ENCODE measurements at regions of chr15 and their contacts with region 1.

Region 1: DNA sequence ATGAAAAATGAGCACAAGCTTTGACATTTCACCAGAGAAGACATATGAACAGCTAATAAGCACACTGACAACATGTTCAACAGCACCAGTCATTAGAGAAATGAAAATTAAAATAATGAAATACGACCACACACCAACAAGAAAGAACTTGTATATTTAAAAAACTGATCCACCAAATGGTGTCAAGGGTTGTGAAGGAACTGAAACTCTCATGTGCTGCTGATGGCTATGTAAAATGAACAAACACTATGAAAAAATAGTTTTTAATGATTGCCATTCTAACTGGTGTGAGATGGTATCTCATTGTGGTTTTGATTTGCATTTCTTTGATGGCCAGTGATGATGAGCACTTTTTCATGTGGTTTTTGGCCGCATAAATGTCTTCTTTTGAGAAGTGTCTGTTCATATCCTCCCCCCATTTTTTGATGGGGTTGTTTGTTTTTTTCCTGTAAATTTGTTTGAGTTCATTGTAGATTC is 193.8 kb downstream of the SCAPER start:
- DNase-seq: no peak
- ATAC-seq: no peak
- H3K4me3 ChIP-seq: no peak overlapping the region
- H3K27ac ChIP-seq: no peak overlapping the region
- H3K4me1 ChIP-seq: no peaks in the 10 kb centered on the region
- H3K27me3 ChIP-seq: no peaks in the 10 kb centered on the region
- CTCF ChIP-seq: no peak

Region 2: GRCh38 chr15:76576523-76577279 is 134.7 kb before region 1 on chr15:
- intact Hi-C with region 1: no loop called
- DNase-seq: peak; percentile 70 to 72
- ATAC-seq: peak; percentile 91 to 99 (median 96)
- H3K4me3 ChIP-seq: peak overlapping the region in 1 of 10 donors; percentile 14
- H3K27ac ChIP-seq: peak overlapping the region in 9 of 10 donors; percentile 1 to 82 (median 69)
- H3K4me1 ChIP-seq: peaks cover 0 to 26% (median 15%) of the 10 kb centered on the region in 9 donors
- H3K27me3 ChIP-seq: no peaks in the 10 kb centered on the region
- CTCF ChIP-seq: no peak

Region 3: GRCh38 chr15:76614725-76615124 is 96.7 kb before region 1 on chr15:
- intact Hi-C with region 1: no loop called
- DNase-seq: no peak
- ATAC-seq: no peak
- H3K4me3 ChIP-seq: no peak overlapping the region
- H3K27ac ChIP-seq: no peak overlapping the region
- H3K4me1 ChIP-seq: no peaks in the 10 kb centered on the region
- H3K27me3 ChIP-seq: no peaks in the 10 kb centered on the region
- CTCF ChIP-seq: no peak

Region 4: DNA sequence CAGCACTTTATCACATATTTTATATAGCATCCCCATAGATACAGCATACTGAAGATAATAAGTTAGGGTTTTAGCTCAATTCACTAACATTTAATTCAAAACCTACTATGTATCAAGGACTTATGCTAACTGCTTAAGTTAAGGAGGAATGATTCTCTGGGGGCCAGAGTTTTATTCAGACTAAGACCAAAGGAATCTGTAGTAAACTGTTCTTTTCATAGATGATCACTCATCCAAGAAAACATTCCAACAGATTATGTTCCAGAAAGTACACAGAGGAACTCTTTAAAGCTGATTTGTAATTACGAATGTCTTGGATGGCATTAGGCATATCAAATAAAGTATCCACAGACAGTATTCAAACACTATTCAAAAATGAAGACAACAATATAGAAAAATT is 32.6 kb before region 1 on chr15:
- intact Hi-C with region 1: no loop called
- DNase-seq: no peak
- ATAC-seq: no peak
- H3K4me3 ChIP-seq: no peak overlapping the region
- H3K27ac ChIP-seq: no peak overlapping the region
- H3K4me1 ChIP-seq: peaks cover 0 to 2% (median 0%) of the 10 kb centered on the region in 9 donors
- H3K27me3 ChIP-seq: no peaks in the 10 kb centered on the region
- CTCF ChIP-seq: no peak

Region 5: GRCh38 chr15:76776480-76776879 is 65.1 kb after region 1 on chr15:
- intact Hi-C with region 1: loop called in 1 of 10 experiments (anchors 10 kb)
- DNase-seq: no peak
- ATAC-seq: no peak
- H3K4me3 ChIP-seq: no peak overlapping the region
- H3K27ac ChIP-seq: no peak overlapping the region
- H3K4me1 ChIP-seq: no peaks in the 10 kb centered on the region
- H3K27me3 ChIP-seq: no peaks in the 10 kb centered on the region
- CTCF ChIP-seq: no peak

Region 6: DNA sequence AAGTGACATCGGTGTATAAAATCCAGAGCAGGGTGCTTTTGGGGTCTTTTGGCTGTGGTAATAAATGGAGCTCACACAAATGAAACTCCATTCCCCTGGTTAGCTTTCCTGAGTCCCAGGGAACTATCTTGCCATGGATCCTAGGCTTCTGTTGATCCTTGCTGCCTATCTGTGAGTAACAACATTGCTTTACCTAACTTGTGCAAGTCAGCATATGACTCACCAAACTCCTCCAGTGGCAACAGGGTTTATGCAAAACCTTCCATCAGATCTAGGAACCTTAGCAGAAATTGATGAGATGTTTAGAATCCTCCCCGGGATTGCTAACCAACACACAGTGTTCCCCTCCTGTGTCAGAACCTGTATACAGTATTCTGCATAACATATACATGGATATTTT is 88.4 kb after region 1 on chr15:
- intact Hi-C with region 1: loop called in 1 of 10 experiments (anchors 10 kb)
- DNase-seq: no peak
- ATAC-seq: no peak
- H3K4me3 ChIP-seq: no peak overlapping the region
- H3K27ac ChIP-seq: no peak overlapping the region
- H3K4me1 ChIP-seq: peaks cover 0 to 4% (median 0%) of the 10 kb centered on the region in 9 donors
- H3K27me3 ChIP-seq: no peaks in the 10 kb centered on the region
- CTCF ChIP-seq: no peak